AG04450 (cell line): ENCODE measurements at regions of chr17 and their contacts with region 1.

Region 1: GRCh38 chr17:7045909-7046724 is 2.2 kb upstream of the SLC16A11 start:
- DNase-seq: peak; percentile 67
- H3K4me3 ChIP-seq: no peak overlapping the region
- H3K27ac ChIP-seq: no peak overlapping the region
- H3K27me3 ChIP-seq: peaks cover 36% of the 10 kb centered on the region
- CTCF ChIP-seq: peak; percentile 80

Region 2: GRCh38 chr17:6800422-6801027 is 245.6 kb before region 1 on chr17:
- CTCF ChIA-PET with region 1: no interaction called
- POLR2A ChIA-PET with region 1: no interaction called
- DNase-seq: no peak
- H3K4me3 ChIP-seq: no peak overlapping the region
- H3K27ac ChIP-seq: no peak overlapping the region
- H3K27me3 ChIP-seq: peaks cover 7% of the 10 kb centered on the region
- CTCF ChIP-seq: no peak

Region 3: GRCh38 chr17:6927290-6928126 is 118.6 kb before region 1 on chr17:
- CTCF ChIA-PET with region 1: interaction called, 11 read pairs
- POLR2A ChIA-PET with region 1: no interaction called
- DNase-seq: peak; percentile 6
- H3K4me3 ChIP-seq: no peak overlapping the region
- H3K27ac ChIP-seq: no peak overlapping the region
- H3K27me3 ChIP-seq: peaks cover 4% of the 10 kb centered on the region
- CTCF ChIP-seq: no peak

Region 4: GRCh38 chr17:6995431-6996255 is 50.5 kb before region 1 on chr17 and contains the start of gene ALOX12:
- CTCF ChIA-PET with region 1: no interaction called
- POLR2A ChIA-PET with region 1: no interaction called
- DNase-seq: no peak
- H3K4me3 ChIP-seq: no peak within 1 kb of the TSS
- H3K27ac ChIP-seq: no peak within 1 kb of the TSS
- H3K27me3 ChIP-seq: peaks cover 3% of the 10 kb centered on the region
- CTCF ChIP-seq: no peak
- polyA plus RNA-seq, gene ALOX12: not detected in 2 replicates

Region 5: DNA sequence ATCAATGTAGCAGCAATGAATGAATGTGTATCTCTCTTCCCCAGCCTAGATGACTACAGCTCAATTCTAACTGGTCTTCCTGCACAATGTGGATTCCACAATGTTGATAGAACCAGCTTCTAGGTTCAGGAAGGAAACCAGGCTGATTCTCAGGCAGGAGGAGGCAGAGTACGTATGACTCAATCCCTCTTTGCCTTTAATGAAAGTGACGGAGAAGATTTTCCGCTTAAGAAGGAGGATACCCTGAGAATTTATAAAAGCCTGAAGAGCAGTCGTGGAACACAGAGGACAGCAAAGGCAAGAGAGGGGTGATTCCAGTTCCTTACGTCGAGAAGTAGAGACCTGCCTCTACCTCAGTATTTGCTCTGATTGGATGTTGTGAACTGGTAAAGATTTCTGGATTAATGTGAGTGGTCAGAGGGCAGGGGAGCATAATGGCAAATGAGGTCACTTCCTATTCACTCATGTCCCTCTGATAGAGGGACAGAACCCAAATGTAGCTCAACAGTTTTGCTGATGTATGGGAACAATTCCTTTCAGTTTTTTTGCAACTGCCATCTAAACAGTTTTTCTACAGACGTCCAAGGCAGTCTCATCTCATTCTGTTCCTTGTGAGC is 12.8 kb after region 1 on chr17:
- CTCF ChIA-PET with region 1: interaction called, 11 read pairs
- POLR2A ChIA-PET with region 1: no interaction called
- DNase-seq: no peak
- H3K4me3 ChIP-seq: no peak overlapping the region
- H3K27ac ChIP-seq: no peak overlapping the region
- H3K27me3 ChIP-seq: peaks cover 5% of the 10 kb centered on the region
- CTCF ChIP-seq: no peak

Region 6: GRCh38 chr17:7177196-7177953 is 131.3 kb after region 1 on chr17:
- CTCF ChIA-PET with region 1: interaction called, 36 read pairs
- POLR2A ChIA-PET with region 1: no interaction called
- DNase-seq: peak; percentile 37
- H3K4me3 ChIP-seq: peak overlapping the region; percentile 70
- H3K27ac ChIP-seq: no peak overlapping the region
- H3K27me3 ChIP-seq: no peaks in the 10 kb centered on the region
- CTCF ChIP-seq: peak; percentile 85

Region 7: DNA sequence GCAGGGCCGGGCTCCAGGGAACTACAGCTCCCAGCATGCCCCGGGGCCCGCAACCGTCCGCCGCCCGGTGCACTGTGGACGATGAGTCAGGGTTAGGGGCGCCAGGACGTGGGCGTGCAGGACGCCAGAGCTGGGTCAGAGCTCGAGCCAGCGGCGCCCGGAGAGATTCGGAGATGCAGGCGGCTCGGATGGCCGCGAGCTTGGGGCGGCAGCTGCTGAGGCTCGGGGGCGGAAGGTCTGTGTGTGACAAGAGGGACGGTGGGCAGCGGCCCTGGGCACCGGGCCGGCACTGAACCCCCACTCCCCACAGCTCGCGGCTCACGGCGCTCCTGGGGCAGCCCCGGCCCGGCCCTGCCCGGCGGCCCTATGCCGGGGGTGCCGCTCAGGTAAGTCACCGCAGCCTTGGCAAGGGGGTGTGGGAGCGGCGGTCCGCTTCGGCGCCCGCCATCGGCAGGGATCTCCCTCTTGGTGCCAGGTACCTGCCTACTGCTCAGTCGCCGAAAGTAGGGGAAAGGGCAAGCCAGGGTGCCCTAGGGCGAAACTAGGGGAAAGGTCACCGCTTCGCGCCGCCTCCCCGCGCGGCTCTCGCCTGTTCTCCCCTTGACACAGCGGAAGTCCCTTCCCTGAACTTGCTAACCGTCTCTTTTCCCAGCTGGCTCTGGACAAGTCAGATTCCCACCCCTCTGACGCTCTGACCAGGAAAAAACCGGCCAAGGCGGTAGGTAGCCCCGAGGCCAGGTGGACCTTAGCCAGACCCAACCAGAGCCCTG is 173.9 kb after region 1 on chr17 and contains the starts of genes ACADVL and DLG4:
- CTCF ChIA-PET with region 1: interaction called, 20 read pairs
- POLR2A ChIA-PET with region 1: interaction called, 8 read pairs
- DNase-seq: peak; percentile 74
- H3K4me3 ChIP-seq: peak within 1 kb of the TSS; percentile 86
- H3K27ac ChIP-seq: peak within 1 kb of the TSS; percentile 87
- H3K27me3 ChIP-seq: no peaks in the 10 kb centered on the region
- CTCF ChIP-seq: no peak
- polyA plus RNA-seq, gene ACADVL: 217 and 262 TPM in 2 replicates
- polyA plus RNA-seq, gene DLG4: 10.2 and 11.6 TPM in 2 replicates